ENCODE measurements at regions of chr10 and their contacts with region 1.

Region 1: GRCh38 chr10:30502266-30503060 is 68.5 kb downstream of the MAP3K8 start:
- DNase-seq: no peak
- ATAC-seq: peak; percentile 81
- H3K4me3 ChIP-seq: peak overlapping the region; percentile 29; the same call in 1 of the 2 replicates
- H3K27ac ChIP-seq: peak overlapping the region; percentile 81
- H3K4me1 ChIP-seq: peaks cover 45% of the 10 kb centered on the region
- H3K27me3 ChIP-seq: no peaks in the 10 kb centered on the region
- CTCF ChIP-seq: no peak
- EP300 ChIP-seq: peak; percentile 56 to 60; a peak in 2 of 4 replicates
- POLR2A ChIP-seq: no peak
- RAD21 ChIP-seq: no peak

Region 2: GRCh38 chr10:30092151-30092790 is 410.2 kb before region 1 on chr10:
- CTCF ChIA-PET with region 1: no interaction called
- POLR2A ChIA-PET with region 1: no interaction called
- RAD21 ChIA-PET with region 1: no interaction called
- SMC1A ChIA-PET with region 1: no interaction called
- in situ Hi-C with region 1: no loop called
- intact Hi-C with region 1: no loop called
- DNase-seq: no peak
- ATAC-seq: no peak
- H3K4me3 ChIP-seq: no peak overlapping the region
- H3K27ac ChIP-seq: no peak overlapping the region
- H3K4me1 ChIP-seq: no peaks in the 10 kb centered on the region
- H3K27me3 ChIP-seq: no peaks in the 10 kb centered on the region
- CTCF ChIP-seq: no peak
- EP300 ChIP-seq: no peak
- POLR2A ChIP-seq: no peak
- RAD21 ChIP-seq: no peak

Region 3: DNA sequence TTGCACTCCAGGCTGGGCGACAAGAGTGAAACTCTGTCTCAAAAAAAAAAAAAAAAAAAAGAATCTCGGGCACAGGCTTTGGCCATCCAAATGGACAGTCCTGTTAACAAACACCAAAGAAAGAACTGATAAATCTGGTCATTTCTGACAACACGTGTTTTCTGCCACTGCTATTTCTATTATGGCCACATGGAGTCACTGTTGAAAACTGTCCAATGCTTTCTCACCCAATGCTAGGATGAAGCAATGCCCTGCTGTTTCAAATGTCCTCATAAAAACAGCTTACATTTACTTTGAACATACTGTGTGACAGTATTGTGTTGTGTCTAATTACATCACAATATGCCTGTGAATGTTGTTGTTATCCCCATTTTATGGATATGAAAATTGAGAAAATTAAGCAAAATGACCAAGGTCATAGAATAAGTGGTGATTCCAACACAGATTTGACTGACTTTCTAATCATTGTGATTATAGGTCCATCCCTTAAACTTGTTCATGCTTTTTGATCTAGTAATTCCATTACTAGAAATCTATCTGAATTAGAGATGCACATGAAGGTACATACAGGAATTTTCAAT is 88.4 kb before region 1 on chr10:
- CTCF ChIA-PET with region 1: interaction called, 5 read pairs
- POLR2A ChIA-PET with region 1: interaction called, 8 read pairs
- RAD21 ChIA-PET with region 1: interaction called, 8 read pairs
- SMC1A ChIA-PET with region 1: interaction called, 25 read pairs
- in situ Hi-C with region 1: no loop called
- intact Hi-C with region 1: no loop called
- DNase-seq: no peak
- ATAC-seq: peak; percentile 71
- H3K4me3 ChIP-seq: no peak overlapping the region
- H3K27ac ChIP-seq: no peak overlapping the region
- H3K4me1 ChIP-seq: peaks cover 28% of the 10 kb centered on the region
- H3K27me3 ChIP-seq: no peaks in the 10 kb centered on the region
- CTCF ChIP-seq: peak; percentile 78 to 87 (median 84)
- EP300 ChIP-seq: no peak
- POLR2A ChIP-seq: no peak
- RAD21 ChIP-seq: peak; percentile 97

Region 4: GRCh38 chr10:30519639-30520038 is 17.2 kb after region 1 on chr10:
- CTCF ChIA-PET with region 1: no interaction called
- POLR2A ChIA-PET with region 1: interaction called, 6 read pairs
- RAD21 ChIA-PET with region 1: interaction called, 165 read pairs
- SMC1A ChIA-PET with region 1: interaction called, 71 read pairs
- in situ Hi-C with region 1: no loop called
- intact Hi-C with region 1: no loop called
- DNase-seq: no peak
- ATAC-seq: no peak
- H3K4me3 ChIP-seq: no peak overlapping the region
- H3K27ac ChIP-seq: no peak overlapping the region
- H3K4me1 ChIP-seq: no peaks in the 10 kb centered on the region
- H3K27me3 ChIP-seq: no peaks in the 10 kb centered on the region
- CTCF ChIP-seq: no peak
- EP300 ChIP-seq: no peak
- POLR2A ChIP-seq: no peak
- RAD21 ChIP-seq: no peak

Measured in GM12878 (cell line).